T-cell (primary cell): ENCODE measurements at regions of chr17 and their contacts with region 1.

Region 1: DNA sequence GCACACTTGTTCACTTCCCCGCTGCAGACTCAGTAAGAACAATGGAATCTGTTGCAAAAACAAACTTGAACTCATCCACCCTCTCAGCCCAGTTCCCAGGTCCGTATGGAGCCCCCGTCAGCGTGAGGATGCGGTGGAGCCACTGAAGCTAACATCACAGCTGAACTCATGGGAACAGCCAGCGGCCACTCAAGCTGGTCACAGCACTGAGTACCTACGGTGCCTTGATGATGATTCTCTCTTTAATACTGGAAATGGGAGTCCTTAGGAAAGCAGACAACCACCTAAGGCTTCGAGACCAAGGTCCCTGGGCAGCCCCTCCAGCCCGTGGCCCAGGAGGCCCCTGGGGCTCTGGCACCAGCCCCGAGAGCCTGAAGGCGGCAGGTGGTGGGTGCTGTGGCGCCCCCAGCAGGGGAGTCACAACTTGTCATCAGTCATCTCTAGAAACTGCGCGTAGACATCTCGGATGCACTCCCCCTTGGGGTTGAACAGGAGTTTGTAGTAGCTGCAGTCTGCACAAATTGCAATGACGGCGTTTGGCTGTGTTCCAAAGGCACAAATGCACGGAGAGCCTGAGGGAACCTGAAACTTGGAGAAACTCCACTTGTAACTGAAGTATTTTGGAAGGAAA is 31.0 kb upstream of the RHOT1 start:
- DNase-seq: peak in 33 of 35 experiments; percentile 10 to 59 (median 37)
- ATAC-seq: peak in 3 of 4 experiments; percentile 48 to 81 (median 55)
- H3K4me3 ChIP-seq: no peak overlapping the region
- H3K4me3 Mint-ChIP-seq: no peak overlapping the region
- H3K27ac ChIP-seq: no peak overlapping the region
- H3K27ac Mint-ChIP-seq: no peak overlapping the region
- H3K4me1 ChIP-seq: peaks cover 16 to 17% of the 10 kb centered on the region in 2 experiments
- H3K4me1 Mint-ChIP-seq: peaks cover 17 to 24% (median 22%) of the 10 kb centered on the region in 3 donors
- H3K27me3 ChIP-seq: peaks cover 0 to 3% of the 10 kb centered on the region in 2 experiments
- H3K27me3 Mint-ChIP-seq: no peaks in the 10 kb centered on the region

Region 2: DNA sequence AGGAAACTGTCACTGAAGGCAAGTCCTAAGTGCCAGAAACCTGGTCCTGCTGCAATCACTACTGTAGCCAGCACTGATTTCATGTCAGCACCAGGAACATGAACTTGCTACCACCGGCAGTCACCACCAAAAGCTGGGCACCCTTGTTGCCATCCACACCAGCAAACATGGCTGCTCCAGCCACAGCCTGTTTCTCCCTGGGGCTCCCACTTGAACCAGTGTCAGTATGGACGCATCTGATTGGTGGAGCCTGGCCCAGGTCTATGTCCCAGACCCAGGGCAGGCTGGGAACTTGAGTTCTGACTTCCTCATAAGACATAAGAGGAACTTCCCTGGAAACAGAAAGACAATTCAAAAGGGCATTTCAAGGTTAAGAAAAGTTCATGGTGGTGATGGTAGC is 308.8 kb before region 1 on chr17:
- CTCF ChIA-PET with region 1: no interaction called
- POLR2A ChIA-PET with region 1: no interaction called
- DNase-seq: no peak
- ATAC-seq: no peak
- H3K4me3 ChIP-seq: no peak overlapping the region
- H3K4me3 Mint-ChIP-seq: no peak overlapping the region
- H3K27ac ChIP-seq: no peak overlapping the region
- H3K27ac Mint-ChIP-seq: no peak overlapping the region
- H3K4me1 ChIP-seq: no peaks in the 10 kb centered on the region
- H3K4me1 Mint-ChIP-seq: no peaks in the 10 kb centered on the region
- H3K27me3 ChIP-seq: peaks cover 0 to 10% of the 10 kb centered on the region in 2 experiments
- H3K27me3 Mint-ChIP-seq: peaks cover 0 to 7% of the 10 kb centered on the region in 2 donors

Region 3: DNA sequence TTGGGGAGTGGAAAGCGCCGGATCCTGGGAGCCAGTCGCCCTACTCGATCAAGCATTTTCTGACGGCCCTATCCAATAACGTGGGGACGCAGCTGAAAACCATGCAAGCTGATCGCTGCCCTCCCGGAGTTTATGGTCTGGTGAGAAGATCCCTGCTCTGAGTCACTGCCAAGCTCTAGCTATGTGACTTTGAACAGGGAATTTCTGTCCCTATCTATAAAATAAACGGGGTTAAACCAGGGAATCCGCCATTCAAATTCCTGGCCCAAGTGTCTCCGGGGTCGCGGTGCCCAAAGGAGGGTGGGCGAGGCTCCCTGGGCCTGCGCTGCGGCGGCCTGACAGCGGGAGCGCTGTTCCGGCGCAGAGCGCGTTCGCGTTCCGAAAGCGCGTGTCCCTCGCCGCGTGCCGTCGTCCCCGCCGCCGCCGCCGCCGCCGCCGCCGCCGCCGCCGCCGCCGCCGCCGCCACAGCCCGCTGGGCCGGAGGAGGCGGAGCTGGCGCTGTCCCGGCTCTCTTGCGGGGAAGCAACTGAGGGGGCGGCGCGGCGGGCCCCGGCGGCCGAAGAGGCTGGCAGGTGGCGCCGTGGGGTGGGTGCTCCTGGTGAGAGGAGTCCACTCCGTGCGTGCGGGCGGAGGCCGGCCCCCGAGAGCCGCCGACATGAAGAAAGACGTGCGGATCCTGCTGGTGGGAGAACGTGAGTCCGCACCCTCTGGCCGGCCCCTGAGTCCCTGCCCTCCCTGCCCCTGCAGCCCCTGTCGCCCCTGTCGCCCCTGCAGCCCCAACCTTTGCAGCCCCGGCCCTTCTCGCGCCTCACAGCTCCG is 31.0 kb after region 1 on chr17 and contains the start of gene RHOT1:
- CTCF ChIA-PET with region 1: no interaction called
- POLR2A ChIA-PET with region 1: interaction called in 1 of 2 experiments, 10 read pairs
- DNase-seq: peak; percentile 37 to 89 (median 68)
- ATAC-seq: peak; percentile 81 to 90 (median 82)
- H3K4me3 ChIP-seq: peak within 1 kb of the TSS; percentile 68 to 95
- H3K4me3 Mint-ChIP-seq: peak within 1 kb of the TSS; percentile 93 to 99 (median 95)
- H3K27ac ChIP-seq: peak within 1 kb of the TSS; percentile 58
- H3K27ac Mint-ChIP-seq: peak within 1 kb of the TSS; percentile 87 to 90
- H3K4me1 ChIP-seq: peaks cover 12 to 31% of the 10 kb centered on the region in 2 experiments
- H3K4me1 Mint-ChIP-seq: peaks cover 23 to 36% (median 31%) of the 10 kb centered on the region in 3 donors
- H3K27me3 ChIP-seq: no peaks in the 10 kb centered on the region
- H3K27me3 Mint-ChIP-seq: no peaks in the 10 kb centered on the region
- total RNA-seq, gene RHOT1: 18.7 to 26.8 (median 24.1) TPM